Lower lobe of right lung (tissue), 2 donors: ENCODE measurements at regions of chr2 and their contacts with region 1.

Region 1: DNA sequence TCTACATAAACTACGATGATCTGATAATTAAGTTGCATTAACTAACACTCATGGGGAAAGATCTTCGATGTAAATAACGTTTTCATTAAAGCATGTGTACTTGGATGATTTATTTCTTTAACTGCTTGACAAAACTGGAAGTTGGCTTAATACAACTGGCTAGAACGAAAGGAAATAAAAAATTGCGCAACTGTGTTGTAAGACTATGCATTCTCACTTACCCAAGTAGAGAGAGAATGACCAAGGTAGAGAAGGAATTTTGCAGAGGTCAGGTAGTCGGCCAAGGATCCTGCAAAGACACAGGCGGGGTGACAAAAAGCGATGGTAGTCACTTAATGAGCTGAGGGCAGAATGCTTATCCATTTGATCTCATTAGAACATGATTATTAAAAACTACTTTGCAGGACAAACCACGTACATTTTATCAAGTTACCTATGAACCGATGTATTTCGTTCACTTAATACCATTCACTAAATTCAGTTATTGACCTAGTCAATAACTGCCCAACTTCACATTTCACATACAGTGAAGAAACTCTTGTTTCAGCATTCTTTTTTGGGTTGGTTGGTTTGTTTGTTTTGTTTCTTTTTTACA is 897 bp downstream of the SLC40A1 start:
- DNase-seq: no peak
- ATAC-seq: peak; percentile 43 to 61
- H3K4me3 ChIP-seq: peak overlapping the region; percentile 75
- H3K27ac ChIP-seq: peak overlapping the region; percentile 94
- H3K4me1 ChIP-seq: peaks cover 48% of the 10 kb centered on the region
- H3K27me3 ChIP-seq: no peaks in the 10 kb centered on the region
- CTCF ChIP-seq: no peak

Region 2: DNA sequence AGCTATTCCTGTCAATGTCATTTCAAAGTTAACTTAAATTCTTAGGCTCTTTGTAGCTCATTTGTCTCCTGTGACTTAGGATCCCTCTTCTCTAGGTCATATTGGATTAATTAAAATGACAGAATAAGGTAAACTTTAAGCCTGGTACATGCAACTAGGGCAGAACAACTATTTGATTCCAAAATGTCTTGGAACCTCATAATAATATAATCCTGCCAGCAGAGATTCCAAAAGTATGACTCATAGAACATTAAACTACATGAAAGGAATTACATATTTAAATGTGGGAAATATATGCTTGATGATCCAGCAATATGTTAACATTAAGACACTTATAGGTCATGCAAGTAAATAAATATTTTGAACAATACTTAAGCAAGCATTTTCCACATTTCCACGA is 542.2 kb before region 1 on chr2:
- intact Hi-C with region 1: no loop called
- DNase-seq: no peak
- ATAC-seq: no peak
- H3K4me3 ChIP-seq: no peak overlapping the region
- H3K27ac ChIP-seq: no peak overlapping the region
- H3K4me1 ChIP-seq: no peaks in the 10 kb centered on the region
- H3K27me3 ChIP-seq: no peaks in the 10 kb centered on the region
- CTCF ChIP-seq: no peak

Region 3: GRCh38 chr2:189477756-189478155 is 101.9 kb before region 1 on chr2:
- intact Hi-C with region 1: loop called (anchors 10 kb)
- DNase-seq: no peak
- ATAC-seq: no peak
- H3K4me3 ChIP-seq: no peak overlapping the region
- H3K27ac ChIP-seq: no peak overlapping the region
- H3K4me1 ChIP-seq: no peaks in the 10 kb centered on the region
- H3K27me3 ChIP-seq: no peaks in the 10 kb centered on the region
- CTCF ChIP-seq: no peak